Tibial artery (tissue), 4 donors: ENCODE measurements at regions of chr19 and their contacts with region 1.

Region 1: GRCh38 chr19:4007021-4007835 is at the start of gene PIAS4:
- DNase-seq: peak; percentile 96 to 98
- H3K4me3 ChIP-seq: peak within 1 kb of the TSS; percentile 89 to 94
- H3K27ac ChIP-seq: peak within 1 kb of the TSS; percentile 79 to 86
- H3K4me1 ChIP-seq: peaks cover 0 to 46% (median 40%) of the 10 kb centered on the region in 4 donors
- H3K27me3 ChIP-seq: no peaks in the 10 kb centered on the region
- CTCF ChIP-seq: no peak

Region 2: DNA sequence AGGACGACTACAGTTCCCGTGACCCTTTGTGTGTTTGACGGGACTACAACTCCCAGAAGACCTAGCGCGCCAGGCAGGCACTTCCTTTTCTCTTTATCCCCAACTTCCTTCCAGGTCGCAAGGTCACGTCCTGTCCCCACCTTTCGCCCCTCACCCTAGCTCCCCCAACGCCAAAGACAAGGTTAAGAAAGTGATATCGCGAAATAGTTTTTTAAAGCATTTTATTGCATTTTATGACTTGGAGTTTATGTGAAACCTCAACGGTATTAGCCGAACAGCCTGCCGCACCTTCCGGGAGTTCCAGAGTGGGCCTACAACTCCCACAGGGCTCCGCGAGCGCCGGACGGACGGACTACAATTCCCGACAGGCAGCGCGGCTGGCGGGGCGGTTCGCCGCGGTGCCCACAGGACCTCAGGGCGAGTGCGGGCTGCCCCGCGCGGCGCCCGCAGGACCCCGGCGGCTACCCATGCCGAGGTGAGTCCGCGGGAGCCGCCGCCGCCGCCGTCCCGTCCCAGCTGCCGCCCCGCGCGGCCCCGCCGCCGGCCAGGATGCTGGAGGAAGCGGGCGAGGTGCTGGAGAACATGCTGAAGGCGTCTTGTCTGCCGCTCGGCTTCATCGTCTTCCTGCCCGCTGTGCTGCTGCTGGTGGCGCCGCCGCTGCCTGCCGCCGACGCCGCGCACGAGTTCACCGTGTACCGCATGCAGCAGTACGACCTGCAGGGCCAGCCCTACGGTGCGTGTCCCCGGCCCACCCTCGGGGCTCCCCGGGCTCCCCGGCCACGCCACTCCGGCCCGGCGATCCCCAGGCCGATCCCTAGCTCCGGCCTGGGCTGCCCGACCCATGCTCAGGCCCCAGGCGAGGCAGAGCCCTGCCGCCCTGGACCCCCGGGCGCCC is 821.5 kb before region 1 on chr19 and contains the start of gene NCLN:
- intact Hi-C with region 1: loop called (anchors 5 kb)
- DNase-seq: peak; percentile 94 to 96
- H3K4me3 ChIP-seq: peak within 1 kb of the TSS; percentile 77 to 99
- H3K27ac ChIP-seq: peak within 1 kb of the TSS; percentile 61 to 67
- H3K4me1 ChIP-seq: peaks cover 0 to 40% (median 25%) of the 10 kb centered on the region in 4 donors
- H3K27me3 ChIP-seq: no peaks in the 10 kb centered on the region
- CTCF ChIP-seq: no peak

Region 3: DNA sequence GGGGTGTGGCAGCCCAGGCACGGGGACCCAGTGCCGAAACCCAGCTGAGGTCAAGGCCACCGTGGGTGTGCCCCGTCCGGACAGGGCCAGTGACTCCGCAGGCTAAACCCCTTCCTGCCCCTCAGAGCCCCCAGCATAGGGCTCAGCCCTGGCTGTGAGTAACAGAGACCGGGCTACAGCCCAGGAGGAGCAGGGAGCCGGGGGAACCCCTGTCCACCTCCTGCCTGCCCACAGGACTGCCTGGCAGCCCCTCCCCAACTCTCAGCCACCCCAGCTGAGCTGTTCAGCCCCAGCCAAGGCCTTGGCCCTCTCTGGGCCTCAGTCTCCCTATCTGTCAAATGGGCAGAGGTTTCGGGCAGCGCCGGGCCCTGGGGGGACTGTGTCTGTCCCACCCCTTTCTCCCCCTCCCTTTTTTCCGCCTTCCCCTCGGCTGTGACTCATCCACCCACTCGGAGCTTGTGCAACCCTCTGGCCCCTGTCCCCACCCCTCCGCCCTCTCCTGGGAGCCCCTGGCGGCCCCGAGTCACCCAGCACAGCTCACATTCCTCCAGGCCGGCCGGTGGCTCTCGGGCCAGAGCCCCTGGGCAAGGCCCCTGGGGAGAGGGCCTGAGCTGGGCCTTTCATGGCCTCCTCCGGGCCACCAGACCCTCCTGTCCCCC is 50.9 kb after region 1 on chr19:
- intact Hi-C with region 1: loop called (anchors 5 kb)
- DNase-seq: peak; percentile 92 to 98
- H3K4me3 ChIP-seq: peak overlapping the region; percentile 37 to 98
- H3K27ac ChIP-seq: peak overlapping the region; percentile 99
- H3K4me1 ChIP-seq: peaks cover 10 to 69% (median 62%) of the 10 kb centered on the region in 4 donors
- H3K27me3 ChIP-seq: no peaks in the 10 kb centered on the region
- CTCF ChIP-seq: peak; percentile 18 to 28

Region 4: DNA sequence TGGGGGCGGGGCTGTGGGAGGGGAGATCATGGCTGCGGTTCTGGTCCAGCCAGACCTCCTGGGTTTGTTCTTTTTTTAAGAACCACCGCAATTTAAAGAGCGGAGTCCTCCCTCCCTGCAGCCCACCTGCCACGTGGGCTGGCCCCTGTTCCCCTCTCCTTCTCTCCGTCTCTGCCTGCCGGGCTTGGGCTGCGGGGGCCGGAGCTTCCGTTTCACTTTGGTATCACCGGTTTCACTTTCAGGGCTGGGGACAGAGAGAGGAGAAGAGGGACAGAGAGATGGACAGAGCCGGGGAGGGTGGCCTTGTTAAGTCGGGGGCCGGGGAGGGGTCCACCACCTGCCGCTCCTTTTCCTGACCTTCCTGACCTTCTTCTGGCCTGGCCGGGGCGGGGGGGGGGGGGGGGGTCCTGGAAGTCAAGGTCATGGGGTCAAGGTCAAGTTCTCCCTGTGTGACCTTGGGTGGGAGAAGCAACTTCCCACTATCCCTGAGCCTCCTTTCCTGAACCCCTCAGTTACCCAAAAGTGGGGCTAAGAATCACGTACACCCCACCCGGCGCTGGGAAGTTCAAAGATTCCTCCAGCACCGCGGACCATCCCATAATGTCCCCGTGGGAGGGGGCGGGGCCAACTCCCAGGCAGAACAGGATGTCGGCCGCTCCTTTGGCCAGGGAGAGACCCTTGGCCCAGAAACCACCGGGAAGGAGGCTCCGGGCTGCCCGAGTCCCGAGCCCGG is 70.8 kb after region 1 on chr19:
- intact Hi-C with region 1: no loop called
- DNase-seq: peak in 1 of 2 donors; percentile 72
- H3K4me3 ChIP-seq: peak overlapping the region; percentile 57 to 74
- H3K27ac ChIP-seq: peak overlapping the region; percentile 64 to 66
- H3K4me1 ChIP-seq: peaks cover 0 to 11% (median 8%) of the 10 kb centered on the region in 4 donors
- H3K27me3 ChIP-seq: peaks cover 0 to 10% of the 10 kb centered on the region in 2 donors
- CTCF ChIP-seq: no peak